H1 (cell line): ENCODE measurements at regions of chr15 and their contacts with region 1.

Region 1: DNA sequence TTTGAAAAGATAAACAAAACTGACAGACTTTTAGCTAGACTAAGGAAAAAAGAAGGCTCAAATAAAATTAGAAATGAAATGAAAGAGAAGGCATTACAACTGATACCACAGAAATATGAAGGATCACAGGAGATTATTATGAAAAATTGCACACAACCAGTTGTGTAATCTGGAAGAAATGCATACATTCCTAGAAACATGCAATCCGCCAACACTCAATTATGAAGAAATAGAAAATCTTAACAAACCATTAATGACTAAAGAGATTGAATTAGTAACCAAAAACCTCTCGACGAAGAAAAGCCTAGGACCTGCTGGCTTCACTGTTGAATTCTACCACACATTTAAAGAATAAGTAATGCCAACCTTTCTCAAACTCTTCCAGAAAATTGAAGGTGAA is 149.5 kb downstream of the SV2B start:
- DNase-seq: no peak
- H3K4me3 ChIP-seq: no peak overlapping the region
- H3K27ac ChIP-seq: no peak overlapping the region
- H3K4me1 ChIP-seq: no peaks in the 10 kb centered on the region
- H3K27me3 ChIP-seq: no peaks in the 10 kb centered on the region
- CTCF ChIP-seq: no peak
- EP300 ChIP-seq: no peak
- POLR2A ChIP-seq: no peak
- RAD21 ChIP-seq: no peak

Region 2: GRCh38 chr15:90934791-90935751 is 314.5 kb before region 1 on chr15 and contains the start of gene UNC45A:
- CTCF ChIA-PET with region 1: no interaction called
- POLR2A ChIA-PET with region 1: no interaction called
- DNase-seq: peak; percentile 79 to 98
- H3K4me3 ChIP-seq: peak within 1 kb of the TSS; percentile 59 to 80 (median 72)
- H3K27ac ChIP-seq: no peak within 1 kb of the TSS
- H3K4me1 ChIP-seq: peaks cover 0 to 13% (median 7%) of the 10 kb centered on the region in 4 experiments; a peak in 6 of 7 replicates
- H3K27me3 ChIP-seq: 0 out of 7 replicates have a peak, but pooled peaks cover 0 to 4% (median 0%) of the 10 kb centered on the region in 4 experiments
- CTCF ChIP-seq: no peak
- EP300 ChIP-seq: no peak
- POLR2A ChIP-seq: no peak; a peak in 1 of 3 replicates
- RAD21 ChIP-seq: no peak
- total RNA-seq, gene UNC45A: 75.4 and 84.2 TPM in 2 replicates

Region 3: DNA sequence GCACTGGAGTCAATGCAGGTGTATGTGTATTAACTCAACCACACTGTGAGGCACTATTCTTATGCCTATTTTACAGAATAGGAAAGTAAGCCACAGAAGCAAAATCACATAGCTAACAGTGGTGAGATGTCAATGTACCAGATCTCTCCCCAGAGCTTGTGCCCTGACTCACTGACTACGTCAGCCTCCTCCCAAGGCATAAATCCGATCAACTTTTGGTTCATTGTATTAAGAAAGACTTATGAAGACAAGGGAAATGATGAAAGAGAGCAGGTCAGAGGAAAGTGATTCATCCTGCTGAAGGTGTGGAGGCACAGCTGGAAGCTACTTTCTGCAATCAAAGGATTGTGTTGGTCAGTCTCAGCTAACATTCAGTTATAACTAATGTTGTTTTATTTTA is 182.6 kb before region 1 on chr15:
- CTCF ChIA-PET with region 1: interaction called, 10 read pairs
- POLR2A ChIA-PET with region 1: no interaction called
- DNase-seq: no peak
- H3K4me3 ChIP-seq: no peak overlapping the region
- H3K27ac ChIP-seq: no peak overlapping the region
- H3K4me1 ChIP-seq: no peaks in the 10 kb centered on the region
- H3K27me3 ChIP-seq: no peaks in the 10 kb centered on the region; a peak in 1 of 7 replicates
- CTCF ChIP-seq: no peak
- EP300 ChIP-seq: no peak
- POLR2A ChIP-seq: no peak
- RAD21 ChIP-seq: no peak

Region 4: GRCh38 chr15:91231703-91232372 is 17.8 kb before region 1 on chr15:
- CTCF ChIA-PET with region 1: interaction called, 27 read pairs
- POLR2A ChIA-PET with region 1: no interaction called
- DNase-seq: no peak
- H3K4me3 ChIP-seq: no peak overlapping the region
- H3K27ac ChIP-seq: no peak overlapping the region
- H3K4me1 ChIP-seq: 0 out of 7 replicates have a peak, but pooled peaks cover 0 to 3% (median 0%) of the 10 kb centered on the region in 4 experiments
- H3K27me3 ChIP-seq: no peaks in the 10 kb centered on the region
- CTCF ChIP-seq: no peak
- EP300 ChIP-seq: no peak
- POLR2A ChIP-seq: no peak
- RAD21 ChIP-seq: no peak

Region 5: DNA sequence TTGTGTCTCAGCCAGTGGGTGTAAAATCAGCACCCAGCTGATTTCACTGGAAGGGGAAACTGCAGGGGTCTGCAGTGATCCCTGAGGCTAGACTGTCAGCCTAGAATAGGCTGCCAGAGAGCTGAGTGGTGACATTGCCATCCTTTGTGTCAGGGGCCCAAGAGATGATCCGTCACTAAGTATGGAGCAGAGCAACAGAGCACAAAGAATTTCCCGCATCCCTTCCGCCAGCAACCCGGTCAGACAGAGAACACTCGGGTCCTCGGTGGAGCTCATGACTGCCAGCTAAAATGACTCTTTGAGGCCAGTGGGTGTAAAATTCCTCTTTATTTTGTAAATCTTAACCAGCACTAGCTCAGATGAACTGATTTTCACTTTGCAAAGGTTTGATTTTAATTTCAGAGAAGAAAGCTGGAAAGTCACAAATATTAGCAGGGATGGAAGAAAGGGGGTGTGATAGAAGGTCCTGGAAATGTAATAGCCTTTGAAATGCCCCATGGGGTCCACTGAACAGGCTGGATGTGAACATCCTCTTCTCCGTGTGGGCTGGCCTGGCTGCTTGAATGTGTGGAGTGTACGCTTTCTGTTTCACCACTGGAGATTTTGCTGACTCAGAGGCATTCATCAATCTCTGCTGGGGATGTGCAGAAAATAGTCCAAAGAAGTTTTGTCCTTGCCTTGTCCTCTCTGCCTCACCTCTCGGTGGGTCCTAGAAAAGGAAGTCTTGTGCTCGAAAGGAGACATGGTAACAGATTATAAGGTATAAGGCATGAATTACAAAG is 10.8 kb before region 1 on chr15:
- CTCF ChIA-PET with region 1: interaction called, 27 read pairs
- POLR2A ChIA-PET with region 1: no interaction called
- DNase-seq: no peak
- H3K4me3 ChIP-seq: no peak overlapping the region
- H3K27ac ChIP-seq: no peak overlapping the region
- H3K4me1 ChIP-seq: no peaks in the 10 kb centered on the region
- H3K27me3 ChIP-seq: no peaks in the 10 kb centered on the region
- CTCF ChIP-seq: no peak
- EP300 ChIP-seq: no peak
- POLR2A ChIP-seq: no peak
- RAD21 ChIP-seq: no peak